ENCODE measurements at regions of chr17 and their contacts with region 1.

Region 1: GRCh38 chr17:73429440-73430164 is 117.8 kb upstream of the CDC42EP4 start:
- H3K4me3 ChIP-seq: no peak overlapping the region
- H3K27ac ChIP-seq: no peak overlapping the region
- H3K4me1 ChIP-seq: peaks cover 6% of the 10 kb centered on the region
- CTCF ChIP-seq: peak; percentile 83

Region 2: GRCh38 chr17:72901083-72901482 is 528.5 kb before region 1 on chr17:
- CTCF ChIA-PET with region 1: no interaction called
- POLR2A ChIA-PET with region 1: no interaction called
- H3K4me3 ChIP-seq: no peak overlapping the region
- H3K27ac ChIP-seq: no peak overlapping the region
- H3K4me1 ChIP-seq: no peaks in the 10 kb centered on the region
- CTCF ChIP-seq: no peak

Region 3: GRCh38 chr17:73371285-73371684 is 58.3 kb before region 1 on chr17:
- CTCF ChIA-PET with region 1: interaction called, 15 read pairs
- POLR2A ChIA-PET with region 1: no interaction called
- H3K4me3 ChIP-seq: no peak overlapping the region
- H3K27ac ChIP-seq: no peak overlapping the region
- H3K4me1 ChIP-seq: no peaks in the 10 kb centered on the region
- CTCF ChIP-seq: no peak

Region 4: GRCh38 chr17:73445466-73445865 is 15.9 kb after region 1 on chr17:
- CTCF ChIA-PET with region 1: interaction called, 15 read pairs
- POLR2A ChIA-PET with region 1: no interaction called
- H3K4me3 ChIP-seq: no peak overlapping the region
- H3K27ac ChIP-seq: no peak overlapping the region
- H3K4me1 ChIP-seq: no peaks in the 10 kb centered on the region
- CTCF ChIP-seq: no peak

Region 5: DNA sequence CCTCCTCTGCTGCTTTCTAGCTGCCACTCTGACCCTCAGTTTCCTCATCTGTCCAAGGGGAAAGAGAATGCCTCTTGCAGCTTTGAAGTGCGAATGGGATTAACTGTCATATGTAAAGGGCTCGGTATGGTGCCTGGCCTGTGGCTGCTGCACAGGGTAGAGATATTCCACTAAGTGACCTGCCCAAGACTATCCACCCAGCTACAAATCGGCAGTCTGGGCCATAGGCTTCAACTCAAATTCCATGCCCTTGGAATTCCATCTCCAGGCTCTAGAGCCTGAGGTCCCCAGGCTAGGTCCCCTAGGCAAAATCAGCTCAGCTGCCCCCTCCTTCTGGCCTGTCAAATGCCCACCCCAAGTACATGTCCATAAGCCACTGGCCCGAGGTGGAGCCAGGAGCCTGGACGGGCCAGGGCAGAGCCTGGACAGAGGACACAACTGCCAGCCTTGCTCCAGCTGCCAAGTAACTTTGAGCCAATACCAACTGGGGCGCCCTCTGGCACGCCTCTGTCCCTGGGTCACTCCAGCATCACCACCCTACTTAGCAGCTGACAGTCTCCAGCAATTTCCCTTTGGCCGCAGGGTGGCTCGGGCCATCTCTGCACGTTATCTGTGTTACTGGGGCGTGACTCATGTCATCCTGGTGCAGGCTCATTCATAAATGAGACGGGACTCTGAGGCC is 157.5 kb after region 1 on chr17:
- CTCF ChIA-PET with region 1: interaction called, 16 read pairs
- POLR2A ChIA-PET with region 1: no interaction called
- H3K4me3 ChIP-seq: no peak overlapping the region
- H3K27ac ChIP-seq: no peak overlapping the region
- H3K4me1 ChIP-seq: peaks cover 6% of the 10 kb centered on the region; the same call in 1 of the 2 replicates
- CTCF ChIP-seq: no peak

Region 6: DNA sequence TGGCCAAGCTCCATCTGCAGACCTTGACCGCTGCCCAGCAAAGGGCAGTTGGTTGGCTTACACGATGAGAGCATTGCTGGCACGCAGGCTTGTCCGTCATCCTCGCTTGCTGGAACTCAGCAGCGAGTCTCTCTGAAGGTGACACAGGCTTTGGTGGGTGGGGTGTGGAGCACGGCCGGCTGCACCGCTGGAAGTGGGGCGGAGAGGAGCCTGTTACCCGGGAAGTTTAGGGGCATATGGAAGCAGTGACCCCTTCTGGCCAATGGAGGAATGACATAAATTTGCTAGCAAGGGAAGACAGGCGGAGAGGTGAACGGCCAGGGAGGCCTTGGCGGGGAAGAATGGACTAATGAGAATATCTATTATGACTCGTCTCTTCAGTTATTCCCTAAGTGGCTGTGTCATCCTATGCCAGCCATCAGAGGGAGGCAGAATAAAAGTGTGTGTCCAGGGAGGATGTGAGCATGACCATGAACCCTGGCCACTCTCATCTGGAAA is 280.5 kb after region 1 on chr17:
- CTCF ChIA-PET with region 1: interaction called, 45 read pairs
- POLR2A ChIA-PET with region 1: no interaction called
- H3K4me3 ChIP-seq: no peak overlapping the region
- H3K27ac ChIP-seq: no peak overlapping the region
- H3K4me1 ChIP-seq: no peaks in the 10 kb centered on the region
- CTCF ChIP-seq: peak; percentile 76

Region 7: DNA sequence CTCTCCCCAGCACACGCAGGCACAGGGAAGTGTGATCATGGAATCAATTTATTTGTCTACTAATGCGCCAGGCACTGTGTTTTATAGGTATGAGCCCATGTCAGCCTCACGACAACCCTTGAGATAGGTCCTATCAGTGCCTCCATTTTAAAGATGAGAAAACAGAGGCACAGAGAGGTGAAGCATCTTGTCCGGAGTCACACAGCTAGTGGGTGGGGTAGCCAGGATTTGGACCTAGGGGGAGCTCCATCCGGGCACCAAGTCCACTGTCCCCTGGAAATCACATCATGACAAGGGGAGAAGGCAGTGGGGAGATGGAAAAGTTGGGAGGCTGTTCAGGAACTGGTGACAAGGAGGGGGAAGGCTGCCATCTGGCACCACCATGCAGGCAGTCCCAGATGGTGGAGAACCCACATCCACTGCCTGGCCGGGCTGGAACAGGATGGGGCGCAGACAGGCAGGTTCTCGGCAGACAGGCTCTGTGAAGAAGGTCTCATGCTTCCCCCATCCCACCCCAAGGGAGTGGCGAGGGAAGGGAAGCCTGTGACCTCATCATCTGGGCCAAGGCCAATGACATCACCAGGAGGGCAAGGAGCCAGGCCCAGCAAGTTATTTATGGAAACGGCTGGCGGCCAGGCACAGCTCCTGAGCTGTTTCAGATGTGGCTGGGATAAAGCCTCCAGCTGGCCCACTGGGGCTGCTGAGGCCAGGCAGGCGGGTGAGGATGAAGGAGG is 340.7 kb after region 1 on chr17:
- CTCF ChIA-PET with region 1: no interaction called
- POLR2A ChIA-PET with region 1: no interaction called
- H3K4me3 ChIP-seq: no peak overlapping the region
- H3K27ac ChIP-seq: no peak overlapping the region
- H3K4me1 ChIP-seq: peaks cover 5% of the 10 kb centered on the region; the same call in 1 of the 2 replicates
- CTCF ChIP-seq: no peak

Region 8: DNA sequence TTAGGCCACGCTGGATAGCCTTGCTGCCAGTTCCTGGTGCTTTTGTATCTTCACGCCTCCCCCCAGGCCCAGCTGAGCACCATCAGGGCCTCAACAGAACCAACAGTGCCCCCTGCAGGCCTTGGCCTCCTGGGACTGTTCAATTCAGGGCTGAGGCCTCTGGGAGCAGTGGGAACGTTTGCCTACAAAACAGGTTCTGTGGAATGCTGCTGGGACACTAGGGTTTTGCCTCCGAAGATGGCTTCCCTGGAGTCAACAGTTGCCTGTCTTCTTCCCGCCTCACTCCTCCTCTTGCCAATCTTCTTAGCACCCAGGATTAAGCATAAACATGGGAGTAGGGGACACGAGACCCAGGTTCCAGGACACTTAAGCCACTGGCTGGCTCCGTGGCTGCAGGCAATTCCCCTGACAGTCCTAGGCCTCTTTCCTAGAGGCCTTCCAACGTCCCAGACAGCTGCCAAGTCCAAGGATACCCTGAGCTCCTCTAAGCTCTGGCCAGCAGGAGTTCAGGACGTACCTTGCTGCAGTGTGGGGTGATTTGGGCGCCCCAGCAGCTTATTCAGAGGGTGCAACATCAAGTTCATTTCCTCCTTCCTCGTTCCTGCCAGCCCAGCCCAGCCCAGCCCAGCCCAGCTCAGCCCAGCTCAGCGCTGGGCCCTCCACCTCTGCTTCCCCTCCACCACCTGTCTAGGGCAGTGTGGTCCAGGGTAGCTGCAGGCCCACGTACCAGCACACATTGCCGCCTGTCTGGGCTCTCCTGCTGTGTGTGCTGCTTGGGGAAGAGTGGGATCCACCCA is 527.3 kb after region 1 on chr17:
- CTCF ChIA-PET with region 1: interaction called, 22 read pairs
- POLR2A ChIA-PET with region 1: no interaction called
- H3K4me3 ChIP-seq: no peak overlapping the region
- H3K27ac ChIP-seq: no peak overlapping the region
- H3K4me1 ChIP-seq: no peaks in the 10 kb centered on the region
- CTCF ChIP-seq: no peak